A673 (cell line): ENCODE measurements at regions of chr11 and their contacts with region 1.

Region 1: GRCh38 chr11:36564376-36565030 is 3.3 kb upstream of the RAG1 start:
- DNase-seq: peak; percentile 94
- H3K4me3 ChIP-seq: peak overlapping the region; percentile 30
- H3K27ac ChIP-seq: no peak overlapping the region
- H3K4me1 ChIP-seq: no peaks in the 10 kb centered on the region
- H3K27me3 ChIP-seq: peaks cover 42% of the 10 kb centered on the region
- CTCF ChIP-seq: peak; percentile 99

Region 2: GRCh38 chr11:36488096-36488495 is 76.4 kb before region 1 on chr11:
- CTCF ChIA-PET with region 1: no interaction called
- POLR2A ChIA-PET with region 1: no interaction called
- intact Hi-C with region 1: no loop called
- DNase-seq: peak; percentile 82
- H3K4me3 ChIP-seq: peak overlapping the region; percentile 11
- H3K27ac ChIP-seq: peak overlapping the region; percentile 57
- H3K4me1 ChIP-seq: peaks cover 43% of the 10 kb centered on the region
- H3K27me3 ChIP-seq: no peaks in the 10 kb centered on the region
- CTCF ChIP-seq: no peak

Region 3: DNA sequence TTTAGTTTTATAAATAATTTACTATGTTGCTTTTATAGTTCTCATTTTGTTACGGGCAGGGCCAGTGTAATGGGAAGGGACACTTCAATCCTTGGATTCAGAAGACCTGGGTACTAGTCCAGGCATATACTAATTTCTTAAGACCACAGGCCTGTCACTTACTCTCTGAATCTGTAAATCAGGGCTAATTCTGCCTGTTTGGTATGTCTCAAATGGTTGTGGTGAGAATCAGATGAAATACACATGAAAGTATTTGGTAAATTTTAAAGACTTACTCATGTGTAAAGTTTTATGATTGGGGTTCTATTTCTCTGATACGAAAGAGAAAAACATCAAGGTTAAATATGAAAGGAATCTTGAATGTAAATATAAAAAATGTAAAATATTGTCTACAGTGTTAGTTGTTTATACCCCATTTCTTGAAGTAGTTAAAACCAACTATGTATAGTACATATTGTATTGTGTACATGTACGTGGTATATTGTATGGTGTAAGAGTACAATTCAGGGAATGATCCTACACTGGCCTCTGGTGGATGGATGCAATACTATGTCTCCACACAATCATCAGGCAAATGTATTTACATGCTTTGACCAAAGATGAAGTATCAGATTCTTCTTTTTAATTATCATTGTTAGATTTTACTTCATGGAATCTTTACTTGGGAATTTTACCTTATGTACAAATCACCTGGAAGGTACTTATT is 58.1 kb after region 1 on chr11:
- CTCF ChIA-PET with region 1: interaction called, 5 read pairs
- POLR2A ChIA-PET with region 1: no interaction called
- intact Hi-C with region 1: loop called (anchors 1 kb)
- DNase-seq: peak; percentile 75
- H3K4me3 ChIP-seq: no peak overlapping the region
- H3K27ac ChIP-seq: no peak overlapping the region
- H3K4me1 ChIP-seq: peaks cover 11% of the 10 kb centered on the region
- H3K27me3 ChIP-seq: no peaks in the 10 kb centered on the region
- CTCF ChIP-seq: peak; percentile 86

Region 4: GRCh38 chr11:36672813-36673450 is 108.4 kb after region 1 on chr11:
- CTCF ChIA-PET with region 1: interaction called, 16 read pairs
- POLR2A ChIA-PET with region 1: no interaction called
- intact Hi-C with region 1: loop called (anchors 1 kb)
- DNase-seq: peak; percentile 83
- H3K4me3 ChIP-seq: no peak overlapping the region
- H3K27ac ChIP-seq: no peak overlapping the region
- H3K4me1 ChIP-seq: no peaks in the 10 kb centered on the region
- H3K27me3 ChIP-seq: no peaks in the 10 kb centered on the region
- CTCF ChIP-seq: peak; percentile 99

Region 5: GRCh38 chr11:36702330-36703055 is 138.0 kb after region 1 on chr11:
- CTCF ChIA-PET with region 1: interaction called, 15 read pairs
- POLR2A ChIA-PET with region 1: no interaction called
- intact Hi-C with region 1: no loop called
- DNase-seq: peak; percentile 92
- H3K4me3 ChIP-seq: no peak overlapping the region
- H3K27ac ChIP-seq: no peak overlapping the region
- H3K4me1 ChIP-seq: peaks cover 15% of the 10 kb centered on the region
- H3K27me3 ChIP-seq: no peaks in the 10 kb centered on the region
- CTCF ChIP-seq: peak; percentile 99

Region 6: DNA sequence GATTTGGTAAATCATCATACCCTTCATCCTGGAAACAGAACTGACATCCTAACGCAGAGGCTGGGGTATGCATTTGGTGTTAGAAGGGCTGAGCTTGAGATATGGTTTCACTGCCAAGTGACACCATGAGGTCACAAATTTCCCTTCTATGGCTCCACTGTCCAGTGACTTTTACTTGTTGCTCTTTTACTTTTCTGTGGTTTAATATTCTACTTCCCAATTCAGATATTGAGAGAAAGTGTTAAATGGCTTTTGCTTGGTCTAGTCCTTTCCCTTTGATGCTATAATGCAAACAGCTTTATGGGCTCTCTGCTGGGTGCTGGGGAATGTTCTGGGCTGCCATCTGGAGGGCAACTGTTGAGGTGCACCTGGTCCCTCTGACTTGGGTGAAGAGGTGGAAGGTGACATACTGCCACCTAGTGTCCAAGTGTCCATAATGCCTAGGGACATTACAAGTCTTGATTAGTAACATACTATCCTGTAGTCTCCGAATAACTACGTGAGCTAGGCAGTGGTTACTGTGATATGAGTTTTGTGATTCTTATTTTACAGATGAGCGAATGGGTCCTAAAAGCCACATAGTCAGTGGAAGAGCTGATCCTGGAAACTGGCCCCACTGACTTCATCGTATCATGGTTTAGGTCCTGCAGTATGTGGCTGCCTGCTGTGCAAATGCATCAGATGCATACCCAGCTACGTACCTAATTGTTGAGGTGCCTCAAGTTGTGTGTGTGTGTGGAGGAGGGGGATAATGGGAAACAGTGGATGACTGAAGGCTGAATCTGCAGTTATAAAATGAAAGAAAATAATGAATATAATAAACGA is 182.6 kb after region 1 on chr11:
- CTCF ChIA-PET with region 1: interaction called, 115 read pairs
- POLR2A ChIA-PET with region 1: no interaction called
- intact Hi-C with region 1: loop called (anchors 1 kb)
- DNase-seq: peak; percentile 99
- H3K4me3 ChIP-seq: no peak overlapping the region
- H3K27ac ChIP-seq: no peak overlapping the region
- H3K4me1 ChIP-seq: peaks cover 11% of the 10 kb centered on the region
- H3K27me3 ChIP-seq: peaks cover 19% of the 10 kb centered on the region
- CTCF ChIP-seq: peak; percentile 100

Region 7: DNA sequence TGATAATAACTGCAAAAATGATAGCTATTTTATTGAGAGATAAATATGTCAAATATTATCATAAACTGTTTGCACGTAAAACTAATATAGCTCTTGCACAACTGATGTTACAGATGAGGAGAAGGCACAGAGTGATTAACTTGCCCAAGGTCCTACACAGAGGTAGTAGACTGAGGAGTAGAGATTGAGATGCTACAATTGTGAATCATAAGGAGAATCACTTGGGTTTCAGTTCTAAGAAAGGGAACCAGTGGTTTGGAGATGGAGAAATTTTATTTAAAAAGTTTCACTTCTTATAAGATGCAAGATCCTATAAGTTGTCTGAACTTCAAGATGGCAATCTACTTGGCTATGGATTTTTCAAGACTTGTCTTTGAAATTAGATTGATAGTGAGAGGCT is 258.3 kb after region 1 on chr11:
- CTCF ChIA-PET with region 1: no interaction called
- POLR2A ChIA-PET with region 1: no interaction called
- intact Hi-C with region 1: no loop called
- DNase-seq: no peak
- H3K4me3 ChIP-seq: no peak overlapping the region
- H3K27ac ChIP-seq: no peak overlapping the region
- H3K4me1 ChIP-seq: peaks cover 8% of the 10 kb centered on the region
- H3K27me3 ChIP-seq: no peaks in the 10 kb centered on the region
- CTCF ChIP-seq: no peak

Region 8: GRCh38 chr11:37108436-37109285 is 544.2 kb after region 1 on chr11:
- CTCF ChIA-PET with region 1: no interaction called
- POLR2A ChIA-PET with region 1: no interaction called
- intact Hi-C with region 1: no loop called
- DNase-seq: peak; percentile 92
- H3K4me3 ChIP-seq: peak overlapping the region; percentile 0
- H3K27ac ChIP-seq: peak overlapping the region; percentile 79
- H3K4me1 ChIP-seq: peaks cover 48% of the 10 kb centered on the region
- H3K27me3 ChIP-seq: no peaks in the 10 kb centered on the region
- CTCF ChIP-seq: no peak